ENCODE measurements at regions of chr3 and their contacts with region 1.

Region 1: DNA sequence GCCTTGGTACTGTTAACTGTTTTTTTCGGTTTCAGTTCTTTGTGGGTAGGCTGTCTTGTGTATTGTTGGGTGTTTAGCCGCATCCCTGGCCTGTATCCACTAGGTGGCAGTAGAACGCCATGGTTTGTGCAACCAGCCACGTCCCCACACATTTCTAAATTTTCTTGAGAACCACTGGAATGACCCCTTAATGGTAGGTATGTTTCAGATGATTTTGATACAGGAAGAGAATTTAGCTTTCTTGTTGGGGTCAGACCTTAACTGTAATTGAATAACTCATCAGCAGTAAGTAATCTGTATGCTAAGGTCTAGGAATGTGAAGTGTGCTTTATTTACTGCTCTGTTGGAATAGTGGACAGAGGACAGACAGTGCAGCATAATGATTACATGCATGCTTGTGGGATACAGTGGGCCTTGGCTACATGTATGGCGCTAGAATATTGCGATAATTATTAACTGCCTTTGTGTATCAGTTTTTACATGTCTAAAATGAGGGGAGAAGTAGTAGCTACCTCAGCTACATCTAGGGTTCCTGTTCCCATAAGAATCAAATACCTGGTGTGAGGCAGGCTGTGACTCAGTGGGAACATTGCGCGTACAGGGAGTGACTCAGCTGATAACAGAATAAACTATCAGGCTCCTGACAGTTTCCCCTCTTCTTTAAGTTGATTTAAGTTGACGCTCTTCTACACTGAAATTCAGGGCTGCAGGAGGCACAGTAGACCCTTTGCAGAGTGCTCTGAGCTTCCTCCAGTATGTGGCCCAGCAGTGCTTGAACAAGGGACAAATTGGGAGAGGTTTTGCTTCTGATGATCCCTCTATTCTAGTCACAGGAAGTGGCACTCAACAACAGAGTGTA is 25.0 kb upstream of the GPR171 start:
- DNase-seq: no peak
- H3K4me3 ChIP-seq: no peak overlapping the region
- H3K27ac ChIP-seq: no peak overlapping the region
- H3K4me1 ChIP-seq: peaks cover 6% of the 10 kb centered on the region
- H3K27me3 ChIP-seq: no peaks in the 10 kb centered on the region
- CTCF ChIP-seq: peak; percentile 32 to 91 (median 90)
- POLR2A ChIP-seq: no peak

Region 2: GRCh38 chr3:151282921-151283320 is 54.9 kb after region 1 on chr3:
- intact Hi-C with region 1: loop called (anchors 10 kb)
- DNase-seq: no peak
- H3K4me3 ChIP-seq: no peak overlapping the region
- H3K27ac ChIP-seq: peak overlapping the region; percentile 10
- H3K4me1 ChIP-seq: peaks cover 11% of the 10 kb centered on the region
- H3K27me3 ChIP-seq: no peaks in the 10 kb centered on the region
- CTCF ChIP-seq: peak; percentile 46 to 81 (median 78)
- POLR2A ChIP-seq: no peak

Region 3: GRCh38 chr3:151751161-151751560 is 523.1 kb after region 1 on chr3:
- intact Hi-C with region 1: no loop called
- DNase-seq: no peak
- H3K4me3 ChIP-seq: no peak overlapping the region
- H3K27ac ChIP-seq: no peak overlapping the region
- H3K4me1 ChIP-seq: peaks cover 6% of the 10 kb centered on the region
- H3K27me3 ChIP-seq: no peaks in the 10 kb centered on the region
- CTCF ChIP-seq: no peak
- POLR2A ChIP-seq: no peak